Motor neuron (in vitro differentiated cells): ENCODE measurements at regions of chr5 and their contacts with region 1.

Region 1: GRCh38 chr5:32232441-32233219 is 58.5 kb upstream of the GOLPH3 start:
- ATAC-seq: peak in 7 of 8 experiments; percentile 37 to 98 (median 59)
- H3K4me3 ChIP-seq: no peak overlapping the region
- H3K27ac ChIP-seq: no peak overlapping the region
- H3K4me1 ChIP-seq: no peaks in the 10 kb centered on the region

Region 2: GRCh38 chr5:31645420-31646081 is 587.1 kb before region 1 on chr5:
- in situ Hi-C with region 1: no loop called
- ATAC-seq: no peak
- H3K4me3 ChIP-seq: no peak overlapping the region
- H3K27ac ChIP-seq: no peak overlapping the region
- H3K4me1 ChIP-seq: peaks cover 0 to under 1% of the 10 kb centered on the region in 2 donors

Region 3: GRCh38 chr5:32329308-32329834 is 96.7 kb after region 1 on chr5:
- in situ Hi-C with region 1: loop called in 1 of 9 experiments (anchors 10 kb)
- ATAC-seq: peak in 4 of 8 experiments; percentile 54 to 99 (median 96)
- H3K4me3 ChIP-seq: no peak overlapping the region
- H3K27ac ChIP-seq: no peak overlapping the region
- H3K4me1 ChIP-seq: peaks cover 0 to 2% of the 10 kb centered on the region in 2 donors